MCF 10A (cell line): ENCODE measurements at regions of chr20 and their contacts with region 1.

Region 1: GRCh38 chr20:13302647-13303450 is 81.8 kb downstream of the ISM1 start:
- DNase-seq: peak; percentile 61
- H3K4me3 Mint-ChIP-seq: no peak overlapping the region
- H3K27ac Mint-ChIP-seq: no peak overlapping the region
- H3K4me1 Mint-ChIP-seq: no peaks in the 10 kb centered on the region
- H3K27me3 Mint-ChIP-seq: no peaks in the 10 kb centered on the region
- CTCF ChIP-seq: peak; percentile 68

Region 2: GRCh38 chr20:12984069-12984765 is 318.6 kb before region 1 on chr20:
- CTCF ChIA-PET with region 1: no interaction called
- POLR2A ChIA-PET with region 1: no interaction called
- intact Hi-C with region 1: no loop called
- DNase-seq: peak; percentile 23
- H3K4me3 Mint-ChIP-seq: no peak overlapping the region
- H3K27ac Mint-ChIP-seq: no peak overlapping the region
- H3K4me1 Mint-ChIP-seq: peaks cover 15% of the 10 kb centered on the region
- H3K27me3 Mint-ChIP-seq: no peaks in the 10 kb centered on the region
- CTCF ChIP-seq: no peak

Region 3: GRCh38 chr20:13111249-13111911 is 191.5 kb before region 1 on chr20:
- CTCF ChIA-PET with region 1: interaction called, 170 read pairs
- POLR2A ChIA-PET with region 1: no interaction called
- intact Hi-C with region 1: no loop called
- DNase-seq: no peak
- H3K4me3 Mint-ChIP-seq: no peak overlapping the region
- H3K27ac Mint-ChIP-seq: no peak overlapping the region
- H3K4me1 Mint-ChIP-seq: no peaks in the 10 kb centered on the region
- H3K27me3 Mint-ChIP-seq: no peaks in the 10 kb centered on the region
- CTCF ChIP-seq: no peak

Region 4: GRCh38 chr20:13142143-13142542 is 160.7 kb before region 1 on chr20:
- CTCF ChIA-PET with region 1: interaction called, 30 read pairs
- POLR2A ChIA-PET with region 1: no interaction called
- intact Hi-C with region 1: no loop called
- DNase-seq: no peak
- H3K4me3 Mint-ChIP-seq: no peak overlapping the region
- H3K27ac Mint-ChIP-seq: no peak overlapping the region
- H3K4me1 Mint-ChIP-seq: no peaks in the 10 kb centered on the region
- H3K27me3 Mint-ChIP-seq: no peaks in the 10 kb centered on the region
- CTCF ChIP-seq: no peak

Region 5: DNA sequence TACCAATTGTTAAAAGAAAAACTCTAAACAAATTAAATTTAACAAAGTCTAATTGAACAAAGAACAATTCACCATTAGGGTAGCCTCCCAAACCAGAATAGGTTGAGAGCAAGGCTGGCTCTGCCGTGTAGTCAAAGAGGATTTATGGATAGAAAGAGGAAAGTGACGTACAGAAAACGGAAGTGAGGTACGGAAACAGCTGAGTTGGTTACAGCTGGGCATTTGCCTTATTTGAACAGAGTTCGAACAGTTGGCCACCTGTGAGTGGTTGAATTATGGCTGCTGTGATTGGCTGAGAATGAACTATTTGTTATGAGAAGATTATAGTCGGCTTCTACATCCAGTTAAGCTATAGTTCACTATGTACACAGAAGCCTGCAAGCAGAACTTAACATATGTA is 100.3 kb before region 1 on chr20:
- CTCF ChIA-PET with region 1: interaction called, 11 read pairs
- POLR2A ChIA-PET with region 1: interaction called, 3 read pairs
- intact Hi-C with region 1: no loop called
- DNase-seq: no peak
- H3K4me3 Mint-ChIP-seq: no peak overlapping the region
- H3K27ac Mint-ChIP-seq: no peak overlapping the region
- H3K4me1 Mint-ChIP-seq: peaks cover 7% of the 10 kb centered on the region
- H3K27me3 Mint-ChIP-seq: no peaks in the 10 kb centered on the region
- CTCF ChIP-seq: no peak

Region 6: DNA sequence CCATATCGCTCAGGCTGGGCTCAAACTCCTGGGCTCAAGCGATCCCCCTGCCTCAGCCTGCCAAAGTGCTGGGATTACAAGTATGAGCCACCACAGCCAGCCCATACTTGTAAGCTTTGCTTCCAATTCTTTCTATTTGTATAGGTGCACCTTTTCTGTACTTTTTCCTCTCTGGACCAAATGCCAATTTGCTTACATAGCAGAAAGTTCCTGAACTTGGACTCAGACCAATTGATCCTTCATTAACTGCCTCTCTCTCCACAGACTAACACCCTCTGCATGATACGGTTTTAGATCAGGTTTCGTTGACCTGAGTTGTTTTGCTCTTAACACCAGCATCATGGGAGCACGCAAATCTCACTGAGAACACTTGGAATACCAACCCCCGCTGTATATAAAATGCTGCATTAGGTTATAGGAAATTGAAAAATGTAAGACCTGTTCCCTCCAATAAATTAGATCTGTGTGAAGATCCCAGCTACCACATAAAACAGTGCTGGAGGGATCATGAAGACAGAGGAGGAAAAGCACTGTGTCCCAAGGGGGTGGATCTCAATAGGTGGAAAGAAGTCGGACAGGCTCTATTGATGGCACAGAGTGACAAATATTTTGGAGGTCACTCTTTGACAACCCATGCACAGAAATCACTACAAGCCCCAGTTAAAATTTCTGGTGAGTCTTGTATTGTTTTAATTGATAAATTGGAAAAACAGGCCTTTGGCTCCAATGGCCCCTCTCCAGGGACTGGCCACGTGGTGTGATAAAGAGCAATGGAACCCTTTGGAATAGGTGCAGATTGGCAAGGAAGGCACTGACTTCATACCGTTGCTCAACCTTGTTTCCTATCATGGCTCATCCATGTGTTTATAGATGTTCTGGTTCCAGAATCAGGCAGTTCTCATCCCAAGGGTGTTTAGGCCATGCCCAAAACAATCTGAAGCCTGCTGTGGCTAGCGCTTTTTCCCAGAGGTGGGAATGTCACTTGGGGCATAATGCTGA is 30.6 kb before region 1 on chr20:
- CTCF ChIA-PET with region 1: interaction called, 23 read pairs
- POLR2A ChIA-PET with region 1: interaction called, 3 read pairs
- intact Hi-C with region 1: no loop called
- DNase-seq: no peak
- H3K4me3 Mint-ChIP-seq: no peak overlapping the region
- H3K27ac Mint-ChIP-seq: peak overlapping the region; percentile 8
- H3K4me1 Mint-ChIP-seq: peaks cover 7% of the 10 kb centered on the region
- H3K27me3 Mint-ChIP-seq: no peaks in the 10 kb centered on the region
- CTCF ChIP-seq: no peak

Region 7: DNA sequence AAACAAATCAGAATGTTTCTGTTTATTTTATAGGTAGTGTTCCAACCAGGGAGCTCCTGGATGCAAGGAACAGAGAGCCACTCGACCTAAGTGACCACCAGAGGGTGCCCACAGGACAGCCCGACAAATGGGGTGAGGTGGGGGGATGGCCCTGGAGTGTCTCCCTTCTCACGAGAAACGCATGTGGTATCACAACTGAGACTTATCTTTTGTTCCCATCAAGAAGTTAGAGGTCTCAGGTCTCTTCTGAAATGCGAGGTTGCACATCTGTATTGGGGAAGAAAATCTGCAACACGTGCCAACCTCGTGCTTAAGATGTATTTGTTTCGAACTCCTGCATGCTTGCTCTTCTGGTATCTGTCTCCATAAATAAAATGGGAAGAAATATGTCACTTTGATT is 22.2 kb after region 1 on chr20:
- CTCF ChIA-PET with region 1: interaction called, 32 read pairs
- POLR2A ChIA-PET with region 1: no interaction called
- intact Hi-C with region 1: no loop called
- DNase-seq: peak; percentile 51
- H3K4me3 Mint-ChIP-seq: no peak overlapping the region
- H3K27ac Mint-ChIP-seq: no peak overlapping the region
- H3K4me1 Mint-ChIP-seq: no peaks in the 10 kb centered on the region
- H3K27me3 Mint-ChIP-seq: no peaks in the 10 kb centered on the region
- CTCF ChIP-seq: peak; percentile 38

Region 8: GRCh38 chr20:13384132-13384531 is 81.3 kb after region 1 on chr20:
- CTCF ChIA-PET with region 1: no interaction called
- POLR2A ChIA-PET with region 1: no interaction called
- intact Hi-C with region 1: no loop called
- DNase-seq: no peak
- H3K4me3 Mint-ChIP-seq: no peak overlapping the region
- H3K27ac Mint-ChIP-seq: no peak overlapping the region
- H3K4me1 Mint-ChIP-seq: no peaks in the 10 kb centered on the region
- H3K27me3 Mint-ChIP-seq: no peaks in the 10 kb centered on the region
- CTCF ChIP-seq: no peak

Region 9: GRCh38 chr20:13703265-13703664 is 400.4 kb after region 1 on chr20:
- CTCF ChIA-PET with region 1: no interaction called
- POLR2A ChIA-PET with region 1: no interaction called
- intact Hi-C with region 1: no loop called
- DNase-seq: no peak
- H3K4me3 Mint-ChIP-seq: no peak overlapping the region
- H3K27ac Mint-ChIP-seq: no peak overlapping the region
- H3K4me1 Mint-ChIP-seq: no peaks in the 10 kb centered on the region
- H3K27me3 Mint-ChIP-seq: no peaks in the 10 kb centered on the region
- CTCF ChIP-seq: no peak